ENCODE measurements at regions of chr10 and their contacts with region 1.

Region 1: GRCh38 chr10:16777473-16778370 is 39.5 kb downstream of the RSU1 start:
- DNase-seq: peak; percentile 64 to 70 (median 66)
- ATAC-seq: peak; percentile 57; the same call in 2 of the 3 replicates
- H3K4me3 ChIP-seq: no peak overlapping the region
- H3K27ac ChIP-seq: no peak overlapping the region
- H3K4me1 ChIP-seq: no peaks in the 10 kb centered on the region
- H3K27me3 ChIP-seq: no peaks in the 10 kb centered on the region
- CTCF ChIP-seq: peak; percentile 50 to 80 (median 61); a peak in 5 of 6 replicates
- EP300 ChIP-seq: no peak
- POLR2A ChIP-seq: no peak
- RAD21 ChIP-seq: peak; percentile 77 to 82

Region 2: GRCh38 chr10:15901889-15902288 is 875.8 kb before region 1 on chr10:
- CTCF ChIA-PET with region 1: interaction called, 4 read pairs
- POLR2A ChIA-PET with region 1: no interaction called
- in situ Hi-C with region 1: no loop called
- intact Hi-C with region 1: loop called (anchors 2 kb)
- DNase-seq: no peak
- ATAC-seq: no peak
- H3K4me3 ChIP-seq: no peak overlapping the region
- H3K27ac ChIP-seq: no peak overlapping the region
- H3K4me1 ChIP-seq: peaks cover 0 to 3% of the 10 kb centered on the region in 2 experiments; a peak in 1 of 5 replicates
- H3K27me3 ChIP-seq: no peaks in the 10 kb centered on the region; a peak in 1 of 5 replicates
- CTCF ChIP-seq: no peak
- EP300 ChIP-seq: no peak
- POLR2A ChIP-seq: no peak
- RAD21 ChIP-seq: no peak

Region 3: GRCh38 chr10:16116404-16117304 is 661.1 kb before region 1 on chr10:
- CTCF ChIA-PET with region 1: no interaction called
- POLR2A ChIA-PET with region 1: no interaction called
- in situ Hi-C with region 1: no loop called
- intact Hi-C with region 1: loop called (anchors 10 kb)
- DNase-seq: peak; percentile 15 to 28 (median 26)
- ATAC-seq: peak; percentile 61; the same call in 1 of the 3 replicates
- H3K4me3 ChIP-seq: no peak overlapping the region
- H3K27ac ChIP-seq: no peak overlapping the region
- H3K4me1 ChIP-seq: no peaks in the 10 kb centered on the region
- H3K27me3 ChIP-seq: no peaks in the 10 kb centered on the region
- CTCF ChIP-seq: peak; percentile 50 to 58 (median 56)
- EP300 ChIP-seq: no peak
- POLR2A ChIP-seq: no peak
- RAD21 ChIP-seq: peak; percentile 37 to 58; a peak in 3 of 4 replicates

Region 4: DNA sequence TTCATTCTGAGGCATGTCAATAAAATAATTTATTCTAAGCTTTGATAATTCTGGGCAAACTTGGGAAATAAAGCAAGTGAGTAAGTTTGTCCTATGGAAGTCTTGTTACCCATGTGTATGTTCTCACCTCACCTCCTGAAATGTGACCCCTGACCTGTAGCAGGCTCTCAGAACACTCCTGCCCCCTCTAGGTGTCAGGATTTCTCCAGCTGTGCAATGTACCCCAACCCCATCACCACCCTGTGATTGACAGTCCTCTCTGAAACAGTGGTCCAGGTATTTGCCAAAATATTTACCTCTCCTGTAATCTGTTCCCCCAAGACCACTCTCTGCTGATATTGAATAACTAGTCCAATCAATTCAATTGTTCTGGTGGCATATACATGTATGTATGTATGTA is 463.5 kb before region 1 on chr10:
- CTCF ChIA-PET with region 1: no interaction called
- POLR2A ChIA-PET with region 1: no interaction called
- in situ Hi-C with region 1: no loop called
- intact Hi-C with region 1: loop called (anchors 1 kb)
- DNase-seq: peak; percentile 15 to 20 (median 18)
- ATAC-seq: peak; percentile 67
- H3K4me3 ChIP-seq: no peak overlapping the region
- H3K27ac ChIP-seq: no peak overlapping the region
- H3K4me1 ChIP-seq: no peaks in the 10 kb centered on the region
- H3K27me3 ChIP-seq: no peaks in the 10 kb centered on the region
- CTCF ChIP-seq: peak; percentile 13 to 45 (median 35); a peak in 3 of 6 replicates
- EP300 ChIP-seq: no peak
- POLR2A ChIP-seq: no peak
- RAD21 ChIP-seq: peak in 1 of 2 experiments; percentile 59; a peak in 2 of 4 replicates

Region 5: GRCh38 chr10:16545116-16545736 is 232.5 kb before region 1 on chr10:
- CTCF ChIA-PET with region 1: no interaction called
- POLR2A ChIA-PET with region 1: no interaction called
- in situ Hi-C with region 1: no loop called
- intact Hi-C with region 1: loop called (anchors 5 kb)
- DNase-seq: peak; percentile 24 to 46 (median 32)
- ATAC-seq: peak; percentile 79
- H3K4me3 ChIP-seq: no peak overlapping the region
- H3K27ac ChIP-seq: no peak overlapping the region
- H3K4me1 ChIP-seq: no peaks in the 10 kb centered on the region; a peak in 1 of 5 replicates
- H3K27me3 ChIP-seq: peaks cover 6 to 12% of the 10 kb centered on the region in 2 experiments; a peak in 4 of 5 replicates
- CTCF ChIP-seq: peak; percentile 46 to 70 (median 69); a peak in 5 of 6 replicates
- EP300 ChIP-seq: no peak
- POLR2A ChIP-seq: no peak
- RAD21 ChIP-seq: peak; percentile 44 to 73

Region 6: DNA sequence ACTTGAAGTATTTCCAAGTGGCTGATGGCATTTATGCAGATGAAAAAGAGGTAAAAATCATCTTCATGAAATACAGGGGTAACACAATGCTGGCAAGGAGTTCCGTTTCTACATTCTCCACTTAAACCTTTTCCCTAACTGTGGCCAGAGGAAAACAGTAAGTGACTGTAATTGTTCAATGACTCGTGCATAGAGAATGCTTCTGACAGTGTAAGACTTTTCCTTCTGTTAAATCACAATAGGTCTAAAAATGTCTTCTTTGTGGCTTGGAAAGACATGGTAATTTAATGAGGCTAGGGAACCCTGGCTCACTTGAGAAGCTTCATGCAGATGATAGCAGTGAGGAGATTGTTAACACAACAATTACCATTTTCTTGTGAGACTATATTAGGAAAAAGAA is 89.8 kb after region 1 on chr10:
- CTCF ChIA-PET with region 1: no interaction called
- POLR2A ChIA-PET with region 1: no interaction called
- in situ Hi-C with region 1: no loop called
- intact Hi-C with region 1: no loop called
- DNase-seq: no peak
- ATAC-seq: no peak
- H3K4me3 ChIP-seq: no peak overlapping the region
- H3K27ac ChIP-seq: no peak overlapping the region
- H3K4me1 ChIP-seq: no peaks in the 10 kb centered on the region
- H3K27me3 ChIP-seq: peaks cover 2 to 5% of the 10 kb centered on the region in 2 experiments; a peak in 1 of 5 replicates
- CTCF ChIP-seq: no peak
- EP300 ChIP-seq: no peak
- POLR2A ChIP-seq: no peak
- RAD21 ChIP-seq: no peak

Region 7: GRCh38 chr10:16891375-16892313 is 113.9 kb after region 1 on chr10:
- CTCF ChIA-PET with region 1: no interaction called
- POLR2A ChIA-PET with region 1: no interaction called
- in situ Hi-C with region 1: no loop called
- intact Hi-C with region 1: no loop called
- DNase-seq: peak; percentile 41 to 81 (median 55)
- ATAC-seq: peak; percentile 94
- H3K4me3 ChIP-seq: peak overlapping the region; percentile 20
- H3K27ac ChIP-seq: peak overlapping the region; percentile 77
- H3K4me1 ChIP-seq: peaks cover 0 to 6% of the 10 kb centered on the region in 2 experiments; a peak in 2 of 5 replicates
- H3K27me3 ChIP-seq: 0 out of 5 replicates have a peak, but pooled peaks cover 0 to 2% of the 10 kb centered on the region in 2 experiments
- CTCF ChIP-seq: peak; percentile 65 to 83 (median 82)
- EP300 ChIP-seq: peak; percentile 50; the same call in 1 of the 2 replicates
- POLR2A ChIP-seq: peak; percentile 100
- RAD21 ChIP-seq: peak; percentile 83 to 89

Region 8: DNA sequence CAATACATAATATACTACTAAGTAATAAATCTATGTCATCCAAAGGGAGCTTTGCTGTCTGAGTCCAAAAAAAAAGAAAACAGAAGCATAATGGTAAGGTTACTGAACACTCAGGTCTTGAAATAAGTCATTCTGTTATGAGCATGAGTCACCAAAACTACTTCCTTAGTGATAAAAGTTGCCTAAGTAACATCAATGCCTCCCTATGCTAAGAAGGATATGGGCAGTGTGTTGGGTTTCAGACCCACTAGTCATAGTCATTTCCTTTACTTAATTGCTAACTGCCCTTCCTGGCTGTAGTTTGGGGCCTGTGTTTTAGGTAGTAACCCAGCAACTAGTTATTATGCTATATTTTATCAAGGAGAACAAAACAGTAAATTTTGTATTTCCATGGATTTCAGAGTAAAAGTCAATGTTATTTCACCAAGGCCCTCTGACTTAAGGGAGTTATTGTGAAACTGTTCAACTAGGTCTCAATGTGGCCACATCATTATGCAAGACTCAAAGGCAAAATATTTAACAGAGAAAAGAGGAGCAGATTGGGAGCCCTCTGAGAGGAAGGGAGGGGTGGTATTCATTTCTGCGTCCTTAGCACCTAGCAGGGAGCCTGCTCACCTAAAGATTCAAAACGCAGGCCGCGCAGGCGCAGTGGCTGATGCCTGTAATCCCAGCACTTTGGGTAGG is 438.6 kb after region 1 on chr10:
- CTCF ChIA-PET with region 1: no interaction called
- POLR2A ChIA-PET with region 1: no interaction called
- in situ Hi-C with region 1: no loop called
- intact Hi-C with region 1: no loop called
- DNase-seq: peak; percentile 32 to 87 (median 60)
- ATAC-seq: peak; percentile 89
- H3K4me3 ChIP-seq: no peak overlapping the region
- H3K27ac ChIP-seq: peak overlapping the region; percentile 88
- H3K4me1 ChIP-seq: peaks cover 5 to 44% of the 10 kb centered on the region in 2 experiments
- H3K27me3 ChIP-seq: no peaks in the 10 kb centered on the region
- CTCF ChIP-seq: peak in 1 of 3 experiments; percentile 7; a peak in 1 of 6 replicates
- EP300 ChIP-seq: peak; percentile 95
- POLR2A ChIP-seq: peak; percentile 49; the same call in 1 of the 2 replicates
- RAD21 ChIP-seq: no peak

Measured in K562 (cell line).